ENCODE measurements at regions of chr13 and their contacts with region 1.

Region 1: GRCh38 chr13:100721885-100722512 is 47.4 kb upstream of the TMTC4 start:
- DNase-seq: peak; percentile 76
- ATAC-seq: peak; percentile 56
- H3K4me3 Mint-ChIP-seq: no peak overlapping the region
- H3K27ac Mint-ChIP-seq: no peak overlapping the region
- H3K4me1 Mint-ChIP-seq: peaks cover 2% of the 10 kb centered on the region
- H3K27me3 Mint-ChIP-seq: peaks cover 11% of the 10 kb centered on the region
- CTCF ChIP-seq: peak; percentile 78

Region 2: GRCh38 chr13:100734194-100734720 is 12.3 kb after region 1 on chr13:
- CTCF ChIA-PET with region 1: interaction called, 11 read pairs
- POLR2A ChIA-PET with region 1: no interaction called
- intact Hi-C with region 1: no loop called
- DNase-seq: no peak
- ATAC-seq: no peak
- H3K4me3 Mint-ChIP-seq: no peak overlapping the region
- H3K27ac Mint-ChIP-seq: no peak overlapping the region
- H3K4me1 Mint-ChIP-seq: no peaks in the 10 kb centered on the region
- H3K27me3 Mint-ChIP-seq: peaks cover 6% of the 10 kb centered on the region
- CTCF ChIP-seq: no peak

Region 3: DNA sequence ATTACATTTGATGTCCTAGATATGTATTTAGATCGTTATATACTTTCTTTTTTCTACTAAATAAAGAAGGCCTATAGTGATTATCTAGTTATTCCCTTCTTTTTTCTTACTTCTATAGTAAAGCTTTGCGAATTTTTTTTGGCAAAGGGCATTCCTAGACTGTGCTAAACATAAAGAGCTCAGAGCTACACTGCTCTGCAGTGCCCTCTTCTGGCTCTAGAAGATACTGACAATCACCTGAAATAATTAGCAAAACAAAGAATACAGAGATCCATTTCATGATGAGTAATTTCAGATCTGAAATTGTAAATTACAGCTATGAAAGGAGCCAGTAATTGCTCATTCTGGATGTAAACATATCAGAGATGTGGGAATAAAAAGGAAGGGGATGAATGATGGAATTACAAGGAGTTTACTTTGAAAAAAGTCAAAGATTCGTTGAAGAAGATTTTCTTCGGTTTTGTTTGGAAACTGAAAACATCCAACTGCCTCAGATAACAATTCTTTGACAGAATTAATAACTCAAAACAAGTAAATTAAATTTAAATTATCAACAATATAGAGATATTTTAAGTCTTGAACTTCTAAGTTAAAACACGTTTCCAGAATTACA is 405.8 kb after region 1 on chr13:
- CTCF ChIA-PET with region 1: interaction called, 6 read pairs
- POLR2A ChIA-PET with region 1: no interaction called
- intact Hi-C with region 1: loop called (anchors 10 kb)
- DNase-seq: peak; percentile 34
- ATAC-seq: peak; percentile 75
- H3K4me3 Mint-ChIP-seq: no peak overlapping the region
- H3K27ac Mint-ChIP-seq: no peak overlapping the region
- H3K4me1 Mint-ChIP-seq: no peaks in the 10 kb centered on the region
- H3K27me3 Mint-ChIP-seq: peaks cover 2% of the 10 kb centered on the region
- CTCF ChIP-seq: peak; percentile 80

Measured in activated CD8-positive, alpha-beta T cell treated with anti-CD3 and anti-CD28 coated beads for 36 hours (primary cell).